ENCODE measurements at regions of chr5 and their contacts with region 1.

Region 1: DNA sequence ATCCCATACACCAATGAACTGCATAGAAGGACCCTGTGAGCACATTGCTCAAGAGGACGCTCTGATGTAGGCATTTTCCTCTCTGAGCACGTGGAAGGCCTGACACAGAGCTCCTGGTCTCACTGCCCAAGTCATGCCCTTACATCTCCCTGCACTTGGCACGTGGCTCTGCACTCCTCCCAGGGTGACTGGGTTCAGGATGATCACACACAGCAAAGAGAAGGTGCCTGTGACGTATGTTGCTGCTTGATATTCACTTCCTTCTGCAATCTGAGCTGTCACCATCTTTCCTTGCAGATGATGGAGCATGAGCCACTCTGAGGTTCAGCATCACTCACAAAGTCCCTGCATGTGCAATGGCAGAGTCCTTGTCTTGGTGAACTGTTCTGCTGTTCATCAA is 125.2 kb downstream of the FSTL4 start:
- DNase-seq: no peak
- H3K4me3 ChIP-seq: no peak overlapping the region
- H3K27ac ChIP-seq: no peak overlapping the region
- H3K4me1 ChIP-seq: peaks cover 0 to 4% (median 3%) of the 10 kb centered on the region in 4 experiments; a peak in 3 of 7 replicates
- H3K27me3 ChIP-seq: no peaks in the 10 kb centered on the region; a peak in 1 of 7 replicates
- CTCF ChIP-seq: no peak
- EP300 ChIP-seq: no peak
- POLR2A ChIP-seq: no peak
- RAD21 ChIP-seq: no peak

Region 2: GRCh38 chr5:133474851-133475590 is 12.1 kb before region 1 on chr5:
- CTCF ChIA-PET with region 1: interaction called, 11 read pairs
- POLR2A ChIA-PET with region 1: no interaction called
- DNase-seq: no peak
- H3K4me3 ChIP-seq: no peak overlapping the region
- H3K27ac ChIP-seq: no peak overlapping the region
- H3K4me1 ChIP-seq: 0 out of 7 replicates have a peak, but pooled peaks cover 0 to under 1% (median 0%) of the 10 kb centered on the region in 4 experiments
- H3K27me3 ChIP-seq: no peaks in the 10 kb centered on the region; a peak in 1 of 7 replicates
- CTCF ChIP-seq: no peak
- EP300 ChIP-seq: no peak
- POLR2A ChIP-seq: no peak
- RAD21 ChIP-seq: no peak

Measured in H1 (cell line).